AG04449 (cell line): ENCODE measurements at regions of chr12 and their contacts with region 1.

Region 1: GRCh38 chr12:91355150-91356006 is 172.8 kb upstream of the DCN start:
- DNase-seq: no peak
- H3K4me3 ChIP-seq: no peak overlapping the region
- CTCF ChIP-seq: peak; percentile 86

Region 2: GRCh38 chr12:90940872-90941499 is 414.4 kb before region 1 on chr12:
- CTCF ChIA-PET with region 1: interaction called, 89 read pairs
- POLR2A ChIA-PET with region 1: no interaction called
- DNase-seq: no peak
- H3K4me3 ChIP-seq: no peak overlapping the region
- CTCF ChIP-seq: peak; percentile 51

Region 3: GRCh38 chr12:90959538-90960139 is 395.7 kb before region 1 on chr12:
- CTCF ChIA-PET with region 1: interaction called, 46 read pairs
- POLR2A ChIA-PET with region 1: no interaction called
- DNase-seq: no peak
- H3K4me3 ChIP-seq: no peak overlapping the region
- CTCF ChIP-seq: peak; percentile 55

Region 4: GRCh38 chr12:90978117-90978770 is 377.1 kb before region 1 on chr12:
- CTCF ChIA-PET with region 1: interaction called, 115 read pairs
- POLR2A ChIA-PET with region 1: no interaction called
- DNase-seq: no peak
- H3K4me3 ChIP-seq: no peak overlapping the region
- CTCF ChIP-seq: peak; percentile 51

Region 5: DNA sequence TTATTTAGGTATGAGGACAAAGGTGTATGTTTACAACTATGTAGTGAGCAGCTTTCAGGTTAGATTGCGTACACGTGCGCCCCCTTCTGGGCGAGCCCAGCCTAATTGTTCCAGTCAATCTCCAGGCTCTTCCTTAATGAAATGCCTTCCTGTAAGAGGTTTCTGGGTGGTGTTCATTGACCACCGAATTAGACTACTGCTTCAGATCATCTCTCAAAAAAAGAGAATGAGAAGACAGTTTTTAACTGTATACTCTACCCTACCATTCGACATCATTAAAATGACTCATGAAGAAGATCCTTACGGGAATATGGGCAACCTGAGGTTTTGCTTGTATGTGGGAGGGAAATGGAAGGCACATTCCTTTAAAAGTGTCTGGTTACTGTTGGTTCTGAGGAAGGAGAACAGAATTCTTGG is 246.2 kb before region 1 on chr12:
- CTCF ChIA-PET with region 1: interaction called, 13 read pairs
- POLR2A ChIA-PET with region 1: no interaction called
- DNase-seq: no peak
- H3K4me3 ChIP-seq: peak overlapping the region; percentile 58
- CTCF ChIP-seq: peak; percentile 47

Region 6: GRCh38 chr12:91332302-91332701 is 23.1 kb before region 1 on chr12:
- CTCF ChIA-PET with region 1: interaction called, 55 read pairs
- POLR2A ChIA-PET with region 1: interaction called, 3 read pairs
- DNase-seq: no peak
- H3K4me3 ChIP-seq: no peak overlapping the region
- CTCF ChIP-seq: no peak

Region 7: DNA sequence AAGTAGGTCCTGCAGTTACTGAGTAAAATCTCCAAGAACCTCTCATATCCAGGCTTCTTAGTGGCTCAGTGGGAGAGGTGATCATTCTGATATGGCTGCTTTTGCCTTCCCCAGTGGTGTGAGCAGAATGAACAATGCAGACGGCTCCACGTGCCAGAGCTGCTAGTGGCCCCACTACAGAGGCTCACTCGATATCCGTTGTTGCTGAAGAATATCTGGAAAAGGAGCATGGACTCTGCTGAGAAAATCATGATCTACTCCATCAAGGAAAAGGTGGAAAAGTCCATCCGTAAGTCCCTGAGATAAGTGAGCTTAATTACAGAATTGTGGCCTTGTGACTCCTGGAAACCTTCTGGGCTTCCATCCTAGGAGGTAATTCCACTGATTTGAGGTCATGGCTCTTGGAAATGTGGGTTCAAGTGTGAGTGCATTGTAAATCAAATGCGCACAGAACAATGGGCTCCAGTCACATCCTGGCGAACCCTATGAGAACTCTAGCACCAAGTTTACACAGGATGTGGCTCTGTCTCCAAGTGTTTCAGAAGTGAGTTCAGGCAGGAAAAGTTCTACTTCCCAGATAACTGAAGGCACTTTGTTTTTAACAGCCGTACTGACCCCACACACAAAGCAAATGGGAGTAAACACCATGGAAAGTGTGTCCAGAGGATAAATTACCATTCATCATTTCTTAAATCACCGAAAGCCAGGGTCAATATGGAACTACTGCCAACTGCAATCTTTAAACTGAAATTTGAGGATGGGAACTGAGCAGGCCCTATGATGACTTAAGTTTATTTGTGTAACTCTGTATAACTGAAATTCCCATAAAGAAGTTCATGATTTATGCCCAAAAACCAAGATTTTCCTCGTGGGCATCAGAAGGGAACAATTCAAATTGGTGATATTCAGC is 1398.9 kb after region 1 on chr12:
- CTCF ChIA-PET with region 1: no interaction called
- POLR2A ChIA-PET with region 1: no interaction called
- DNase-seq: no peak
- H3K4me3 ChIP-seq: no peak overlapping the region
- CTCF ChIP-seq: no peak